Activated naive CD4-positive, alpha-beta T cell treated with anti-CD3 and anti-CD28 coated beads for 36 hours (primary cell): ENCODE measurements at regions of chr17 and their contacts with region 1.

Region 1: DNA sequence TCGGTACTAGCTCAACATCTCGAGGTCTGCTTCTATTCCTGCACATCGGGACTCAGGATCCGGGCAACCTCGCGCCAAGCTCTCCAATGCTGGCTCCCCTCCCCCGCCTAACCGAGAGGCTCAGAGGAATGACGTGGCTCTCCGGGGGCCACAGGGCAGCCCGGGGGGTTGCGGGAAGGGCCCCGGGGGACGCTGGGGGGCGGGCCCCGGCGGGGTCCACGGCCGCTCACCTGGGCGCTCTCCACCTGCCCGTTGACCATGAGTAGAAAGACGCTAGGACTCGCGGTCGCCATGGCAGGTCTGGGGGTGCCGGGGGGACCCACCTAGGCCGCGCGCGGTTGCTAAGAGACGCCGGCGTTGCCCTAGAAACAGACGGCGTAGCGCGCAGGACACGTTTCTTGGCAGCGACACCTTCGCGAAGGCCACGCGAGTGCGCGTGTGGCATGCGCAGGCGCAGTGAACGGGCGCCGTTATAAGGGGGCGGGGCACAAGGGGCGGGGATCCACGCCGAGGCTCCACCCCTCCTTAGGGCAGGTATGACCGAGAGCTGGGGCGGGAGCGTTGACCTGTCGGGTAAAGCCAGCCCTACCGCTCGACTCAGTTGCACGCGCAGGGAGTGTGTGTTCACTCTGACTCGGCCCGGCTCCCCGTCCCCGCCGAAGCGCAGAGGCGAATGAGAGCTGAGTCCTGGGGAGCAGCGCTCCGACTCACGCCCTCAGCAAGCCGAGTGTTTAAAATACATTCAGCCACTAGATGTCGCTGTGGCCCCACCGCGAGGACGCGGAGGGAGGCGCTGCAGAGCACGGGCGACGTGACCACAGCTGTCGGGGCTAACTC is at the start of gene B9D1:
- DNase-seq: peak; percentile 93
- H3K4me3 Mint-ChIP-seq: peak within 1 kb of the TSS; percentile 87
- H3K27ac Mint-ChIP-seq: peak within 1 kb of the TSS; percentile 33
- H3K4me1 Mint-ChIP-seq: peaks cover 5% of the 10 kb centered on the region
- H3K27me3 Mint-ChIP-seq: peaks cover 2% of the 10 kb centered on the region
- total RNA-seq, gene B9D1: 8.7 TPM

Region 2: DNA sequence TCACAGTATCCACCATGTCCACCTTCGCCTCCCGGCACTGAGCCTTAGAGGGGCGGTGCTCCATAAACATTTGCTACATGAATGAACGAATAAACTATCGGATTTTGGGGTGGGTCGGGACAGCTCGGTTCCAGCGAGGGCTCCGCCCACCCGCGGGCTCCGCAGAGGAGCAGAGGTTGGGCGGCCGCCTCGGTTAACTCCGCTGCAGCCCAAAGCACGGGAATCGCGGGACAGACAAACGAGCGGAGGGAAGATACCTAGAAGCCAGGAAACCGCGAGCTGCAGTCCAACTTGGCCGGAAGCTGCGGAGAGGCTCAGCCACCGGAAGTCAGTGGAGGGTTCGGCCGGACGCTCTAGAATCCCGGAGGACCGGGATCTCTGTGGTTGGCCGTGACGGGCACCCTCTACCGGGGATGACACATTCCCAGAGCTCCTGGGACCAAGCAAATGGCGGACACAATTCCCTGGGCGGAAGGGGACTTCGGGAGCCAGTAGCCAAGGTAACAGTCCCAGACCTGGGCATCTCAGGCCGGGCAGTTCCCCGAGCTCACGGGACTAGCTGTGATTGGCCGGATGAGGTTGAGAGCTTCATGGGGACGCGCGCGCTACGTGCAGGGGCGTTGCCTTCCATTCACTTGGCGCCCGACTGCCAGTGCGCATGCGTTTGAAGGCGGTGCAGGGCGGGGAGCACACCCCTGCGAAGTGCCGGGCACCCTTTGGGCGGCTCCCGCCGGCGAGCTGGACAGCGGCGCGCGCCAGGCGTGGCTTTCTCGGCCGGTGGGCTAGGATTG is 15.3 kb after region 1 on chr17:
- CTCF ChIA-PET with region 1: interaction called, 46 read pairs
- intact Hi-C with region 1: loop called (anchors 1 kb)
- DNase-seq: peak; percentile 95
- H3K4me3 Mint-ChIP-seq: peak overlapping the region; percentile 99
- H3K27ac Mint-ChIP-seq: peak overlapping the region; percentile 97
- H3K4me1 Mint-ChIP-seq: peaks cover 8% of the 10 kb centered on the region
- H3K27me3 Mint-ChIP-seq: no peaks in the 10 kb centered on the region

Region 3: DNA sequence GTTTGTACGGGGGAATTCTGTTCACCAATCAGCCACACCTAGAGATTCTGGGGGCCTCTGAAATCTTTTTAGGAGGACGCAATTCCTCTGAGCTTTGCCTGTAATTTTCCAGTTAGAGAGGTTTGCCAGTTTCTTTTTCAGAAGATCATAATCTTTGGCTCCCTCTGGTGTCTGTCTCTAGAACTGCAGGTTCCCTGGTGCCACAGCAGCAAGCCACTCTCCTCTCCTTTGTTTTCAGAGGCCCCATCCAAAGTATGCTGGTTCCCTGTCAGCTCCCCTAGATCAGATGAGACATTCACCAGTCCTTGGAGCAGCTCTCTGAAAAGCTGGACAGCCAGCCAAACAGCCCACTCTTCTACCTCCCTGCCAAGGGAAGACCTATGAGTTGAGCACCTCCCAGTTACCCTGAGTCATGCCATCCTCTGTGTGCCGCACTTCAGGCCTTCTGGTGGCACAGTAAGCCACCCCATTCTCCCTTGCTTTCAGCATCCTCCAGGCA is 84.6 kb after region 1 on chr17:
- CTCF ChIA-PET with region 1: interaction called, 85 read pairs
- intact Hi-C with region 1: loop called (anchors 1 kb)
- DNase-seq: peak; percentile 79
- H3K4me3 Mint-ChIP-seq: no peak overlapping the region
- H3K27ac Mint-ChIP-seq: no peak overlapping the region
- H3K4me1 Mint-ChIP-seq: no peaks in the 10 kb centered on the region
- H3K27me3 Mint-ChIP-seq: peaks cover 5% of the 10 kb centered on the region

Region 4: DNA sequence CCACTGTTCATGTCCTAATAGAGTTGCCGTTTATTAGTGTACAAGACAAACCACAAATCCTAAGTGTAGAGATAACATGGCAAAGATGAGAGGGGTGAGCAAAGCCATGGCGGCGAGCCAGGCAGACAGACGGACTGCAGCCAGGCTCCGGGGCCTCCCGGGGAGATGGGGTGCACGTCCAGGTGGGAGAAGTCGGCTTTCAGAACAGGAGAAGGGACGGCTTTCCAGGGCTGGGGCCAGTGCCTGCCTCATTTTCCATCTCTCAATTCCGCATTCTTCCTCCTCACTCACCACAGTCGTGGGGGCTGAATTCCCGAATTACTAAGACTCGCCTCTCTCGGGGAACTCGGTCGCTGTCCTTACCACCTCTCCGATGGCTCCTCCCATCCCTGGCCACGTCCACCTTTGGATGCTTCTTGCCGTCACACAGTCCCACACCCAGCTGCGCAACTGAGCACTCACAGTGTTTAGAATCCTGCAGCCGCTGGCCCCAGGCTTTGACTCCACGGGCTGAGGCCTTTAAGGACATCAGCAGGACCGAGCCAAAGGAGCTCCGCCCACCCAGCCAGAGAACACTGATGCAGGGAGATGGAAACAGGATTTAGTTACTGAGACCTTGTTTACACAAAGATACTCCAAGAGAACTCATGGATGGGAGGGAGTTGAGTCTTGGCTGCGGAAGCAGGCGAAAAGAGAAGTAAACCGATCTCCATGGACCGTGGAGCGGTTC is 108.2 kb after region 1 on chr17:
- CTCF ChIA-PET with region 1: interaction called, 8 read pairs
- intact Hi-C with region 1: loop called (anchors 1 kb)
- DNase-seq: no peak
- H3K4me3 Mint-ChIP-seq: no peak overlapping the region
- H3K27ac Mint-ChIP-seq: no peak overlapping the region
- H3K4me1 Mint-ChIP-seq: no peaks in the 10 kb centered on the region
- H3K27me3 Mint-ChIP-seq: no peaks in the 10 kb centered on the region

Region 5: DNA sequence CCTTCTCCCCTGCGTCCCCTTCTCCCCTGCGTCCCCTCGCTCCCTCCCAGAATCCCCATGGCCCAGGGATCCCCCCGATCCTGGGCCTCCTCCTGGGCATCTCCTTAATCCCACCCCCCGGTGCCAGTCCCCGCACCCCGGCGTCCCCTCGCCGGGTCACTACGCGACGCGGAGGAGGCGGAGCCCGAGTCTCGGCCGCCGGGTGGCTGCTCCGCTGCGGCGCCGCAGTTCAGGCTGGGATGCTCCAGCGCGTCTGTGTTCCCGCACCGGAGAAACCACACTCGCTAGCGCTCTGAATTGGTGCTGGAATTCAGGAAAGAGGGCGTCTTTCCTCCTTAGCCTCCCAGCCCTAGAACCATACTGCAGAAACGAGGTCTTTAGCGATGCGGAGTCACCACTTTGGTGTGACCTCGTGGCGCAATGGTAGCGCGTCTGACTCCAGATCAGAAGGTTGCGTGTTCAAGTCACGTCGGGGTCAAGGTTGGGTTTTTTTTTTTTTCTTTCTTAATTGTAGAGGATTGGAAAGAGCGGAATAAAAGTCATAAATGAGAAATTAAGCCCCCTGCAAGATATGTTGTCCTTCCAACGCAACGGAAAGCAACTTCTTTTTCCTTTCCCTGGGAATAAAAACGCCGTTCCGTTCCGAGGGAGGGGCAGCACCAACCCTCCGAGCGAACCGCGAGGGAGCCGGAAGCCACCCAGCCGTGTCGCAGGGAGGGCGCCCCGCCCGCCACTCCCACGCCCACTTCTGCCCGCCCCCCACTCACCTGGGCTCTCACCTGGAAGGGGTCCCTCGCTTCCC is 145.5 kb after region 1 on chr17:
- CTCF ChIA-PET with region 1: interaction called, 4 read pairs
- intact Hi-C with region 1: loop called (anchors 1 kb)
- DNase-seq: peak; percentile 90
- H3K4me3 Mint-ChIP-seq: peak overlapping the region; percentile 80
- H3K27ac Mint-ChIP-seq: peak overlapping the region; percentile 93
- H3K4me1 Mint-ChIP-seq: peaks cover 7% of the 10 kb centered on the region
- H3K27me3 Mint-ChIP-seq: peaks cover 3% of the 10 kb centered on the region

Region 6: GRCh38 chr17:19648475-19649406 is 286.2 kb after region 1 on chr17 and contains the start of gene ALDH3A2:
- CTCF ChIA-PET with region 1: interaction called, 4 read pairs
- intact Hi-C with region 1: loop called (anchors 2 kb)
- DNase-seq: peak; percentile 94
- H3K4me3 Mint-ChIP-seq: peak within 1 kb of the TSS; percentile 90
- H3K27ac Mint-ChIP-seq: peak within 1 kb of the TSS; percentile 73
- H3K4me1 Mint-ChIP-seq: peaks cover 32% of the 10 kb centered on the region
- H3K27me3 Mint-ChIP-seq: no peaks in the 10 kb centered on the region
- total RNA-seq, gene ALDH3A2: 21.0 to 22.3 TPM